GM10248 (cell line): ENCODE measurements at regions of chr2 and their contacts with region 1.

Region 1: GRCh38 chr2:218898109-218898878 is 17.6 kb downstream of the WNT10A start:
- DNase-seq: peak; percentile 85
- CTCF ChIP-seq: peak; percentile 99

Region 2: GRCh38 chr2:218832520-218832919 is 65.8 kb before region 1 on chr2:
- CTCF ChIA-PET with region 1: no interaction called
- POLR2A ChIA-PET with region 1: no interaction called
- DNase-seq: no peak
- CTCF ChIP-seq: no peak

Region 3: GRCh38 chr2:218859556-218859987 is 38.7 kb before region 1 on chr2 and contains the start of gene WNT6:
- CTCF ChIA-PET with region 1: interaction called, 89 read pairs
- POLR2A ChIA-PET with region 1: no interaction called
- DNase-seq: no peak
- CTCF ChIP-seq: no peak

Region 4: DNA sequence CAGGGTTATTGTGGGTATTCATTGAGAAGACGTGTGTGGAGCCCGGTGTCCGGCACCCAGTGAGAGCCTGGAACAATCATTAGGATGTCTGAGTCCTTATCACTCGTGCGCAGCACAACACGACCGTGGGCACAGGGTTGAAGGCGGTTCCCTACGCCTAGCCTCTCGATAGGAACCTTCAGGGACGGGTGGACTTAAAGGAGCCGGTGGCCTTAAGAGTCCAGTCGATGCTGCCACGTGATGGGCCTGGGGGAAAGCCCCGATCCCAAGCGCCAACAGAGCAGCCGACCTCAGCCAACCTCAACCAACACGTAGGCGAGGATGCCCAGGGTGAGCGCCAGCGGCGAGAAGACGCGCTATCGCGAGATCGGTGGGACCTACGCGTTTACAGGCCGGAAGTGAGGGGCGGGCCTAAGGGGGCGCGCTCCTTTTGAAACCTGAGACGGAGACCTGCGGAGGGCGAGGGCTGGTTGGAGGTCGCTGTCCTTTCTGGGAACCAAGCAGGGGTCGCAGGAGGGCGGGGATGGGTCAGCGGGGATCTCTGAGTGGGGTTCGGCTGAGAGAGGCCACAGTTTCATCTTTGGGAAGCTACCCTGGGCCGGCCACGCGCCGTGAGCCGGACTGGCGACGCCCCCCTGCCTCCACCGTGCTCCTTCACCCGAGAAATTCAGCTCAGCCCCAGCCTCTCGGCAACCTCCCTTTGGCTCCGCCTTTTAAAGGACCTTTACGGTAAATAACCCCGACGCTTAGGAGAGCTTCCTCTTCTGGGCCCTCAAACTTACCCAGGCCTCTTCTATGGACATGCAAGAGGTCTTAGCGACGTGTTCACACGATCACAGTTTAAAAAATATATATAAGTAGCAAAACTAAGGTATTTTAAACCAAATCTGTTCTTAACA is 10.7 kb after region 1 on chr2:
- CTCF ChIA-PET with region 1: interaction called, 74 read pairs
- POLR2A ChIA-PET with region 1: interaction called, 4 read pairs
- DNase-seq: peak; percentile 92
- CTCF ChIP-seq: no peak

Region 5: DNA sequence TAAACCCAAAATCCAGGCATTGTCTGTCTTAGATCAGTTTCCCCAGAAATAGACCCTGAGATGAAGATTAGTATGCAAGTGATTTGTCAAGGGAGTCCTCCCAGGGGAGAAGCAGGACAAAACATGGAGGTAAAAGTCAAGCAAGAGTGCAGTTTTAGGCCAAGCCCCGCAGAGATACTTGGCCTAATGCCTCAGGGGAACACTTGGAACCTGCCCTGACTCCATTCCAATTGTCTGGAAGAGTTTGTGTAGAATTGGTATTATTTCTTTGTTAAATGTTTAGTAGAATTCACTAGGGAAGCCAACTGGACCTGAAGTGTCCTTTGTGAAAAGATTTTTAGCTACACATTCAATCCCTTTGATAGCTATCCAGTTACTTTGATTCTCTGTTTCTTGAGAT is 16.7 kb after region 1 on chr2:
- CTCF ChIA-PET with region 1: interaction called, 74 read pairs
- POLR2A ChIA-PET with region 1: no interaction called
- DNase-seq: no peak
- CTCF ChIP-seq: no peak

Region 6: DNA sequence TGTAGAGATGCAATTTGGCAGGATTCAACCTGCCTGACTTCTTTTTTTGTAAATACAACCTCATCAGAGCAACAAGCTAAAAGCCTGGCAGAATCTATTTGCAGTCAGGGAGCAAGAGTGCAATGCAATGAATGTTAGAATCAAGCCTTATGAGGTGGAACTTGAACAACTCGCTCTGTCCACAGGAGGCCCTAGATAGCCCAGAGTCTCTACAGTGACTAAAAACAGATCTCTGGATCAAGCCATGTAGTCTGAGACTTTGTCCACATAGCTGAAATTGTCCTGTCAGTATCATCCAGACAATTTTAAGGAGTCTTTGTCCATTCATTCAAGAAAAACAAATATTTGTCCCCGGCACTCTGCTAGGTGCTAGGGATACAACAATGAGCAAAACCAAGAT is 29.1 kb after region 1 on chr2:
- CTCF ChIA-PET with region 1: no interaction called
- POLR2A ChIA-PET with region 1: no interaction called
- DNase-seq: no peak
- CTCF ChIP-seq: no peak

Region 7: DNA sequence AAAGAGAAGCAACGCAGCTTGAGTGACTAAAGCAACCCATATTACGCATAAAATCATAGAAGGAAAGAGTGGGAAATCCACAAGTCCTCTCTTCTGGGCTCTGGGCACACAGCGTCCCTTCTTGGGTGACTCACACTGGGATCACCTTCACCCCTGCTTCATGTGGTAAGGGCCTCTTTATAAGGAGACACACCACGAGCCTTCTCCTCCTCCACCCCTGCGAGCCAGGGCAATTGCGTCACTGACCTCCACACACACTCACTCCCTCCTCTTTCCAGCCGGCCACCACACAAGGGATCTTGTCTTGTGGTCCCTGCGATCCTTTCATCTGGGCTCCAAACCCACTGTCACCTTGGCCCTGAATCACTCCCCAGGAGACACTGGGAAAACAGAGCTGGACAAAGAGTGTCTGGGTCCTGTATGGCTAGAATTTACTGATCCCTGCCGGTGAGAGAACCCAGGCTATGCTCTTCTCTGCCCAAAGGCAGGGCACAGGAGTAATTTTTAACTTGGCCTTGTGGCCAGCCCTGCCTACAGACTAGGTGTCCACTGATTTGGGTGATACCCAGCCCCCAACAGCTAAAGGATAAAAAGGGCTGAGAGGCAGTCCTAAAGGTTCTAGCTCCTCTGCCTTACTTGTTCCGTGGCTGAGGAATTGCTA is 227.1 kb after region 1 on chr2:
- CTCF ChIA-PET with region 1: no interaction called
- POLR2A ChIA-PET with region 1: no interaction called
- DNase-seq: no peak
- CTCF ChIP-seq: no peak